Esophagus squamous epithelium (tissue), 5 donors: ENCODE measurements at regions of chr11 and their contacts with region 1.

Region 1: DNA sequence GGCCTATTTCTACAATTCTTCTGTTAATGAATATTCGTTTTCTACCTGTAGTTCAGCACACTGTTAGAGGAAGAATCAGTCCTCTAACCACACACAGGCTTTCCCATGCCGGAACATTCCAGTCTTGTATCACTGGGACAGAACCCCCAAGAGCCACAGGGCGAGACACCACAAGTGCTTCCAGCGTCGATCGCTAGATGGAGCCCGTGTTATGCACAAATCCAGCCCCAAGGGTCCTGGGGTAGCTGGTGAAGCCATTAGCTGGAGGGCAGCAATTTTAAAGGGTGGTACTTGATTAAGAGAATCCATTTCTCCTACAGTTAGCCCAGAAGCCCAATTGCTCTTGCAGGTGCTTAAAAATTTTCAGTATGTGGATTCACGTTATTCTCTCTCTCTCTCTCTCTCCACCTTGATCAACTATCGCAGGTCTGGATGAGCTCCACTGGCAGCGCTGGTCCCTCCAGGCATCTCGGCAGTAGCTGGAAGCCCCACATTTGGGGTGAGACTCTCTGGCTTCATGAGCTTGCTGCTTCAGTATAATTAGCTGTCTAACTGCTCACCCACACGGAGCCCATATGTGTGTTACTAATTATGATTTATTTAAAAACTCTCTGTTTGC is 148.2 kb upstream of the SNX19 start:
- DNase-seq: no peak
- H3K4me3 ChIP-seq: no peak overlapping the region
- H3K27ac ChIP-seq: no peak overlapping the region
- H3K4me1 ChIP-seq: peaks cover 0 to 9% (median 0%) of the 10 kb centered on the region in 3 donors
- H3K27me3 ChIP-seq: peaks cover 0 to 22% (median 0%) of the 10 kb centered on the region in 4 donors
- CTCF ChIP-seq: peak in 5 of 6 experiments; percentile 54 to 80 (median 59)
- POLR2A ChIP-seq: no peak

Region 2: DNA sequence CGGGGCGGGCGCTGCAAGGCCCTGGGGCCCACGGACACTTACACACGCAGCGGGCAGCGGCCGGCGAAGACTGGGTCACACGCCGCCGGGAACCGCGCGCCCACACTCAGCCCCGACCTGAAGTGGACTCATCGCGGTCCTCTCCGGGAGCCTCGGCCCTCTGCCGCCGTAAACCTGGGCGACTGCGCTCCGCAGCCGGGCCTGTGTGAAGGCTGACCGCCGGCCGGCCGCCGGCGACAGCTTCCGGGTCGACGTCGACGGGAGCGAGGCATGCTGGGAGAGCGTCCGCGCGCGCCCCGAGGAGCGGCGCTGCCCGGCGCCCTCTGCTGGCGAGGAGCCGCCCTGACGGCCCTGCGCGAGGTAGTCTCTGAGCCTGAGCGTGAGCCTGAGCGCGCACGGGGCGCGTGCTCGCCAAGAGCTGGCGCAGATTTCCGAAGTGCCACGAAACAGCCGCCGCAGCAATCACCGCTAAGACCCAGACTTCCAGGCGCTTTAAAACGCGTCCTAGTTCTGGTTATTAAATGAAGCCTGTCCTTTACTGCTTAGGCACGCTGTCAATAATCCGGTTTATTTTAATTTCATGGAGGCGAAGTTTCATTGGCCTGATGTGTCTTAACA is 148.1 kb before region 1 on chr11 and contains the start of gene SNX19:
- intact Hi-C with region 1: no loop called
- DNase-seq: peak; percentile 38
- H3K4me3 ChIP-seq: peak within 1 kb of the TSS; percentile 79 to 95 (median 90)
- H3K27ac ChIP-seq: peak within 1 kb of the TSS; percentile 88 to 93 (median 91)
- H3K4me1 ChIP-seq: peaks cover 8 to 43% (median 14%) of the 10 kb centered on the region in 3 donors
- H3K27me3 ChIP-seq: peaks cover 0 to 5% (median 0%) of the 10 kb centered on the region in 4 donors
- CTCF ChIP-seq: peak; percentile 92 to 100 (median 98)
- POLR2A ChIP-seq: peak in 3 of 4 donors; percentile 80 to 94 (median 92)
- total RNA-seq, gene SNX19: 38.0 to 75.0 (median 52.1) TPM

Region 3: GRCh38 chr11:131511794-131512193 is 447.3 kb after region 1 on chr11:
- intact Hi-C with region 1: loop called (anchors 10 kb)
- DNase-seq: no peak
- H3K4me3 ChIP-seq: no peak overlapping the region
- H3K27ac ChIP-seq: no peak overlapping the region
- H3K4me1 ChIP-seq: no peaks in the 10 kb centered on the region
- H3K27me3 ChIP-seq: peaks cover 0 to 1% (median 0%) of the 10 kb centered on the region in 4 donors
- CTCF ChIP-seq: peak in 5 of 6 experiments; percentile 26 to 67 (median 41)
- POLR2A ChIP-seq: no peak

Region 4: DNA sequence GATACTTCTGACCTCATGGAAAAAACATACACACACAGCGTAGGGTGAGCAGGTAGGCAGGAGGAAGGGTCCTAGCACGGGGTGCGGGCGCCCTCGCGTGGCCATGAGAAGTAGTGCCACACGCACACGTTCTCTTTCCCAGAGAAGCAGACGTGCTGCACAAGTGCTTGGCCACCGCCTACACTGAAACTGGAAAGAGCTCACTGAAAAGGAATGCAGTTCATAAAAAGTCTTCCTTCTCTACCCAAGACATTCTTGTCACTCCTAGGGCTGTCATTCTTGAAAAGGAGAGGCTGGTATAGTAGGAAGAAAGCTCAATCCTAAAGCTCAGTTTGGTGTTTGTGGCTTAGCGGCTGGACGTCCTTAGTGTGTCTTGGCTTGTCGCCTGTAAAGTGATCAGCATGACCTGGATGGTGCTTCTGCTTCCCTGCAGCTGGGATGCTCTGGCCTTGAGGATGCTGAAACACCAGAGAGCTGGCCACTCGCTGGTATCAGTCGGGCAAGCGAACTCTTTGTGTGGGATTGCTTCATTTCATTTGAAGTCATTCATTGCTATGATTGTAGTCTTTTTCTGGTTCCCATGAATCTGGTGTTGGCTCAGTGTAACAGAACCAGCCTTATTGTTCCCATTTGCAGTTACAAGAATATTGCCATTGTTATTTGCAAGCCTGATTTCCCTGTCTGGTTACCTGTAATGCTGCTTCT is 609.7 kb after region 1 on chr11:
- intact Hi-C with region 1: loop called (anchors 5 kb)
- DNase-seq: no peak
- H3K4me3 ChIP-seq: no peak overlapping the region
- H3K27ac ChIP-seq: no peak overlapping the region
- H3K4me1 ChIP-seq: peaks cover 0 to 10% (median 0%) of the 10 kb centered on the region in 3 donors
- H3K27me3 ChIP-seq: no peaks in the 10 kb centered on the region
- CTCF ChIP-seq: peak; percentile 40 to 90 (median 84)
- POLR2A ChIP-seq: no peak